ENCODE measurements at regions of chr7 and their contacts with region 1.

Region 1: GRCh38 chr7:26508481-26508880 is 216.8 kb downstream of the SNX10 start:
- DNase-seq: no peak
- ATAC-seq: no peak
- H3K4me3 ChIP-seq: no peak overlapping the region
- H3K27ac ChIP-seq: no peak overlapping the region
- H3K4me1 ChIP-seq: peaks cover 8% of the 10 kb centered on the region
- H3K27me3 ChIP-seq: no peaks in the 10 kb centered on the region; the same call in 1 of the 2 replicates
- CTCF ChIP-seq: no peak

Region 2: DNA sequence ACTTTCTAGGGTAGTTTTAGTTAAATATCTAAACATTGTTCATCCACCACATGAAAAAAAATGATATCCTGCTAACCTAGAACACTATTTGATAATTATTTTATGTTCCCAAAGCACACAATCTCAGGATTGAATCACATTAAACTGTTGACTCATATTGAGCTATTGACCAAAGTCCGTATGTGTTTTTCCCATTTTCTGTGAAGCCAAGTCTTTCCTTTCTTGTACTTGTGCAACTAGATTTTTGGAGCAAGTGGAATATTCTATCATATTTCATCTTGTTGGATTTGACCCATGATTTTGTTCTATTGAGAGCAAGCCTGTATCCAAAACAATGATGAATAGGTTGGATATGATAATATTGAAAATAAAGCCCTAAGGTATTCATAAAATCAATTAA is 191.3 kb after region 1 on chr7:
- CTCF ChIA-PET with region 1: no interaction called
- POLR2A ChIA-PET with region 1: no interaction called
- in situ Hi-C with region 1: no loop called
- intact Hi-C with region 1: no loop called
- DNase-seq: no peak
- ATAC-seq: no peak
- H3K4me3 ChIP-seq: no peak overlapping the region
- H3K27ac ChIP-seq: no peak overlapping the region
- H3K4me1 ChIP-seq: no peaks in the 10 kb centered on the region
- H3K27me3 ChIP-seq: no peaks in the 10 kb centered on the region
- CTCF ChIP-seq: no peak

Region 3: GRCh38 chr7:28125431-28126409 is 1617.2 kb after region 1 on chr7:
- CTCF ChIA-PET with region 1: interaction called, 14 read pairs
- POLR2A ChIA-PET with region 1: no interaction called
- in situ Hi-C with region 1: no loop called
- intact Hi-C with region 1: no loop called
- DNase-seq: no peak
- ATAC-seq: no peak
- H3K4me3 ChIP-seq: no peak overlapping the region
- H3K27ac ChIP-seq: no peak overlapping the region
- H3K4me1 ChIP-seq: no peaks in the 10 kb centered on the region
- H3K27me3 ChIP-seq: no peaks in the 10 kb centered on the region
- CTCF ChIP-seq: no peak

Measured in Panc1 (cell line).